AG04450 (cell line): ENCODE measurements at regions of chr10 and their contacts with region 1.

Region 1: GRCh38 chr10:88687853-88688467 is 18.1 kb upstream of the LIPK start:
- DNase-seq: no peak
- H3K4me3 ChIP-seq: no peak overlapping the region
- H3K27ac ChIP-seq: no peak overlapping the region
- H3K27me3 ChIP-seq: no peaks in the 10 kb centered on the region
- CTCF ChIP-seq: peak; percentile 85

Region 2: GRCh38 chr10:88565072-88565471 is 122.9 kb before region 1 on chr10:
- CTCF ChIA-PET with region 1: interaction called, 15 read pairs
- POLR2A ChIA-PET with region 1: no interaction called
- DNase-seq: no peak
- H3K4me3 ChIP-seq: no peak overlapping the region
- H3K27ac ChIP-seq: no peak overlapping the region
- H3K27me3 ChIP-seq: no peaks in the 10 kb centered on the region
- CTCF ChIP-seq: peak; percentile 46

Region 3: GRCh38 chr10:88676283-88677060 is 11.5 kb before region 1 on chr10:
- CTCF ChIA-PET with region 1: interaction called, 17 read pairs
- POLR2A ChIA-PET with region 1: no interaction called
- DNase-seq: no peak
- H3K4me3 ChIP-seq: no peak overlapping the region
- H3K27ac ChIP-seq: no peak overlapping the region
- H3K27me3 ChIP-seq: no peaks in the 10 kb centered on the region
- CTCF ChIP-seq: no peak